Esophagus squamous epithelium (tissue), 5 donors: ENCODE measurements at regions of chr22 and their contacts with region 1.

Region 1: GRCh38 chr22:29553351-29554224 is at the start of gene THOC5:
- DNase-seq: peak; percentile 44
- H3K4me3 ChIP-seq: peak within 1 kb of the TSS; percentile 63 to 85 (median 77)
- H3K27ac ChIP-seq: peak within 1 kb of the TSS; percentile 80 to 94 (median 84)
- H3K4me1 ChIP-seq: peaks cover 6 to 30% (median 10%) of the 10 kb centered on the region in 3 donors
- H3K27me3 ChIP-seq: no peaks in the 10 kb centered on the region
- CTCF ChIP-seq: peak; percentile 52 to 77 (median 56)
- POLR2A ChIP-seq: peak in 2 of 4 donors; percentile 35 to 43
- total RNA-seq, gene THOC5: 17.5 to 32.0 (median 25.6) TPM

Region 2: DNA sequence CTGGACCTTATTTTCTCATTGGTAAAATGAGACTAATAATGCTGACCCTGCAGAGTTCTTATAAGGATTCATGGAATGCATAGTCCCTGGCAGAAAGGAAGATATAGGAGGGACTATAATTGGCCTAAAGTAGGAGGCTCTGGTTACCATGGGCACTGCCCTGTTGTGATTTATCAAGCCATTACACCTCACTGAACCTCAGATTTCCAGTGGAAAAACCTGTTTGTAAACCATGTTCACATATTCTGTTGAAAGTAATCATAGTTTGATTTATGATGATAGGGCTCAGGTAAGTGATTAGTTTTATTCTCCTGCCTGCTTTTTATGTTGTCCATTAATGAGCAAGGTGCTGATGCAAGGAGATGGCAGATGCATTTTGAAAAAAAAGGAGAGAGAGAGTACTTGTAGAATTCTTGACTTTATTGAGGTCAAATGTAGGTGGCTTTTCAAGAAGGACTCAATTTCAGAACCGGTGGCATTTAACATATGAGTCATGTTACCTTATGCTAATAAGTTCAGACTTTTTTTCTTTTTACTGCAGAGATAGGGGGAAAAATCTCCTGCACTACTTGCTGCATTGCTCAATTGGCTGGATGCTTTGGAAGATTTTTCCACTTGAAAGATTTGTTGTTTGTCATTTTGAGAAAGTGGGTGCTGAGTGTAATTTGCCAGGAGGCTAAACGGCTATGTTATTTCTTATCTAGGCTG is 64.5 kb after region 1 on chr22:
- intact Hi-C with region 1: loop called (anchors 10 kb)
- DNase-seq: no peak
- H3K4me3 ChIP-seq: no peak overlapping the region
- H3K27ac ChIP-seq: peak overlapping the region; percentile 2 to 60 (median 36)
- H3K4me1 ChIP-seq: peaks cover 15 to 79% (median 38%) of the 10 kb centered on the region in 3 donors
- H3K27me3 ChIP-seq: no peaks in the 10 kb centered on the region
- CTCF ChIP-seq: no peak
- POLR2A ChIP-seq: no peak

Region 3: DNA sequence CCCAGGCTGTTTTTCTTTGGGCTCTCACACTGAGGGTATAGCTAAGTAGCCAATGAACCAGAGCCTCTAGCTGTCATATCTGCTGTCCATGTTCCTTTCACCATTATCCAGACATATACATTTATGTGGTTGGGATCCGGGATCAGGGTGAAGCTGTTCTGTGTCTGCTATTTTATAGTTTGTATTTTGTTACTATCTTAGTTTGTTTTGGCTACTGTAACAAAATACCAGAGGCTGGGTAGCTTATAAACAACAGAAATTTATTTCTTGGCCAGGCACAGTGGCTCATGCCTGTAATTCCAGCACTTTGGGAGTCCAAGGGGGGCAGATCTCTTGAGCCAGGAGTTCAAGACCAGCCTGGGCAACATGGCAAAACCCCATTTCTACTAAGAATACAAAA is 125.7 kb after region 1 on chr22:
- intact Hi-C with region 1: no loop called
- DNase-seq: no peak
- H3K4me3 ChIP-seq: no peak overlapping the region
- H3K27ac ChIP-seq: no peak overlapping the region
- H3K4me1 ChIP-seq: no peaks in the 10 kb centered on the region
- H3K27me3 ChIP-seq: no peaks in the 10 kb centered on the region
- CTCF ChIP-seq: no peak
- POLR2A ChIP-seq: no peak